Motor neuron (in vitro differentiated cells): ENCODE measurements at regions of chr17 and their contacts with region 1.

Region 1: GRCh38 chr17:64020056-64020766 is at the start of gene ICAM2:
- ATAC-seq: peak in 2 of 8 experiments; percentile 63 to 77
- H3K4me3 ChIP-seq: no peak within 1 kb of the TSS
- H3K27ac ChIP-seq: no peak within 1 kb of the TSS
- H3K4me1 ChIP-seq: no peaks in the 10 kb centered on the region
- total RNA-seq, gene ICAM2: 0.32 to 11.5 (median 1.0) TPM in 6 of 8 experiments, not detected in the others

Region 2: DNA sequence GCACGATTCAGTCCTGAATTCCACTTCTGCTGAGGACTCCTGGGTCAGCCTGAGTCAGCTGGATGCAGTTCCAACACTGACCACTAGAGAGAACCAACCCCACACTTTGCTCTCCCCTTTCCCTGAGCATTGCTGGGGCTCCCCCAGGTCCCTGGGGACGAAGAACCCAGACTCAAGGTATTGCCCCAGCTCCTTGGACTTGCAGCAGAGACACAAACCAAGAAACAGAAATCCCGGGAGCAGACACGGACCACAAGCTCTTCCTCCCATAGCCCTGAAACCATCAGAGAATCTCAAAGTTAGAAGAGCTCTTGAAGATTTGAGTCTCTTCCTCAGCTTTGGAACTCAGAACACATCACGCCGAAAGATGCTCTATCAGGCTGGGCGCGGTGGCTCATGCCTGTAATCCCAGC is 100.9 kb before region 1 on chr17:
- in situ Hi-C with region 1: loop called in 2 of 9 experiments (anchors 10 to 25 kb)
- ATAC-seq: peak; percentile 56 to 93 (median 74)
- H3K4me3 ChIP-seq: no peak overlapping the region
- H3K27ac ChIP-seq: no peak overlapping the region
- H3K4me1 ChIP-seq: no peaks in the 10 kb centered on the region

Region 3: DNA sequence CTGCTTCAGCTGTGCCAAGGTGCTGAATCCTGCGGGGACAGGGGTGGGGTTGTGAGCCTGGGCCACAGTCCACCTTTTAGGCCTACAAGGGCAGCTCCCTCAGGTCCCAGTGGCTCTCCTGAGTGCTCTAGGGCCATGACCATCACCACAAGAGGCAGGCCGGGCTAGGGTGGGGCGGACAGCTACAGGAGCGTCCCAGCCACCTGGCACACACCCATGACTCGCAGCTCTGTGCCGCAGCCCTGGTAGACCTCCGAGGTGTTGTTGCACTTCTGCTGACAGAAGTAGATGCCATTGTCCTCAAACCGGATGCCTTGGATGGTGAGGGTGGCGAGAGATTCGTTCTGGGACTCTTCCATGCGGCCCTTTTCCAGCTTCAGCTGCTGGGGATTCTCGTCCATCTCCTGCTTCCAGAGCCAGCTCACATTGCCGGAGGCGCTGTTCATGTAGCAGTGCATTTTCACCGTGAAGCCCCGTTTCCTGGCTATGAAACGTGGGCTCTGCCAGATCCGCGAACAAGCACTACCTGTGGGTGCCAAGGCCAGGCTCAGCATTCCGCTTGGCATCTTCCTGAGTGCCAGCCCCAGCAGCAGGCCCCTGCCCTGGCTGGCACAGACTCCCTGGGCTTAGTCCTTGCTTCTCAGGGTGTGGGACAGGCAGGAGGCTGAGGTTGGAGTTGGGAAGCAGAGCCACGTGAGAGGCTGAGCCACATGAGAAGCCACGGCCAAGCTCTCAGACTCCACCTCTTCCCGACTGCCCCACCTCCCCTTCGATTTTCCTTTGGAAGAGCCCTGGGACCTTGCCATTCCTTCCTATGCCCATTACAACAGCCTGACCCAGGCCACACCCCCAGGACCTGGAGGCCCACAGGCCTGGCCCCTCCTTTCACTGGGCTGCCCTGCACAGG is 90.1 kb before region 1 on chr17:
- in situ Hi-C with region 1: loop called in 1 of 9 experiments (anchors 10 kb)
- ATAC-seq: peak in 4 of 8 experiments; percentile 43 to 65 (median 47)
- H3K4me3 ChIP-seq: no peak overlapping the region
- H3K27ac ChIP-seq: no peak overlapping the region
- H3K4me1 ChIP-seq: peaks cover 0 to 7% of the 10 kb centered on the region in 2 donors